MCF 10A (cell line): ENCODE measurements at regions of chr1 and their contacts with region 1.

Region 1: DNA sequence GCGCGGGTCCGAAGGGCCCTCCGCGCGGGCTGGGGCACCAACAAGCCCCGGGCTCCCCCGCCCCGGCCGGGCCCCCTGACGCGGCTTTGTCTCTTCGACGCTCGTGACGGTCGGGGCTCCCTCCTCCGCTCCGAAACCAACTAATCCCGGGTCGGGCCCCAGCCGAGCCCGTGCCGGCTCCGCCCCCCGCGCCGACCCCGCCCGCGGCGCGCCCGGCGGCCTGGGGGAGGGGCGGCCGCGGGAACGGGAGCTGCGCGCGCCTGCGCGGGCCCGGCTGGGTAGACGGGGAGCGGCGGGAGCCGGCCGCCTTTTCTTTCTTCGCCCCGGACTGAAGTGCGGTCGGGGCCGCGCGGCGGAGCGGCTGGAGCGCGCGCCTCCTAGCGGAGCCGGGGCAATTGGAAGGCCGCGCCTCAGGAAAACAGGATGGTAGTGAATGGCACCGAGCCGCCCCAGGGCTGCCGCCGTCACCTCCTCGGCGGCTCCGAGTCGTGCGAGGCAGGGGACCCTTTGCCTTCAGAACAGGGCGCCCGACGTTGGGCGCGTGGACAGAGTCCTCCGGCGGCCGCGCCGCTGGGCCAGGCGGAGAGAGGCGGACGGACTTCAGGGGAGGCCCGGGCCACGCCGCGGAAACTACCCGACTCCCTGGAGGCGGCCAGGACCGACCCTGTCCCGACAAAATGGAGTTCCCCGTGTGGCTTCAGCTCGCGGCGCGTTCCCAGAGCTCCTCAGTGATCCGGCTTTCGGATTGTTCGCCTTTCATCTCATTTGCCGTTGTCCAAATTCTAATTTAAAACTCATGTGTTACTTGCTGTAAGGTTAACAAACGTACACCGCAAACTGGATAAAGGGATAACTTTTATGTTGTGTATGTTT is at the start of gene TP53BP2:
- DNase-seq: peak; percentile 95
- H3K4me3 Mint-ChIP-seq: peak within 1 kb of the TSS; percentile 87
- H3K27ac Mint-ChIP-seq: peak within 1 kb of the TSS; percentile 100
- H3K4me1 Mint-ChIP-seq: peaks cover 21% of the 10 kb centered on the region
- H3K27me3 Mint-ChIP-seq: no peaks in the 10 kb centered on the region
- CTCF ChIP-seq: peak; percentile 90
- total RNA-seq, gene TP53BP2: 62.4 and 64.0 TPM in 2 replicates

Region 2: GRCh38 chr1:223421676-223422075 is 424.4 kb before region 1 on chr1:
- CTCF ChIA-PET with region 1: no interaction called
- POLR2A ChIA-PET with region 1: no interaction called
- intact Hi-C with region 1: no loop called
- DNase-seq: peak; percentile 90
- H3K4me3 Mint-ChIP-seq: no peak overlapping the region
- H3K27ac Mint-ChIP-seq: peak overlapping the region; percentile 44
- H3K4me1 Mint-ChIP-seq: peaks cover 25% of the 10 kb centered on the region
- H3K27me3 Mint-ChIP-seq: no peaks in the 10 kb centered on the region
- CTCF ChIP-seq: no peak

Region 3: GRCh38 chr1:223712194-223712849 is 133.7 kb before region 1 on chr1 and contains the start of gene CAPN2:
- CTCF ChIA-PET with region 1: interaction called, 9 read pairs
- POLR2A ChIA-PET with region 1: interaction called, 81 read pairs
- intact Hi-C with region 1: loop called (anchors 2 kb)
- DNase-seq: peak; percentile 94
- H3K4me3 Mint-ChIP-seq: peak within 1 kb of the TSS; percentile 77
- H3K27ac Mint-ChIP-seq: peak within 1 kb of the TSS; percentile 88
- H3K4me1 Mint-ChIP-seq: peaks cover 61% of the 10 kb centered on the region
- H3K27me3 Mint-ChIP-seq: no peaks in the 10 kb centered on the region
- CTCF ChIP-seq: peak; percentile 98
- total RNA-seq, gene CAPN2: 513 and 622 TPM in 2 replicates

Region 4: GRCh38 chr1:223780949-223781348 is 65.1 kb before region 1 on chr1:
- CTCF ChIA-PET with region 1: interaction called, 3 read pairs
- POLR2A ChIA-PET with region 1: interaction called, 24 read pairs
- intact Hi-C with region 1: loop called (anchors 1 kb)
- DNase-seq: no peak
- H3K4me3 Mint-ChIP-seq: no peak overlapping the region
- H3K27ac Mint-ChIP-seq: no peak overlapping the region
- H3K4me1 Mint-ChIP-seq: peaks cover 17% of the 10 kb centered on the region
- H3K27me3 Mint-ChIP-seq: no peaks in the 10 kb centered on the region
- CTCF ChIP-seq: no peak

Region 5: DNA sequence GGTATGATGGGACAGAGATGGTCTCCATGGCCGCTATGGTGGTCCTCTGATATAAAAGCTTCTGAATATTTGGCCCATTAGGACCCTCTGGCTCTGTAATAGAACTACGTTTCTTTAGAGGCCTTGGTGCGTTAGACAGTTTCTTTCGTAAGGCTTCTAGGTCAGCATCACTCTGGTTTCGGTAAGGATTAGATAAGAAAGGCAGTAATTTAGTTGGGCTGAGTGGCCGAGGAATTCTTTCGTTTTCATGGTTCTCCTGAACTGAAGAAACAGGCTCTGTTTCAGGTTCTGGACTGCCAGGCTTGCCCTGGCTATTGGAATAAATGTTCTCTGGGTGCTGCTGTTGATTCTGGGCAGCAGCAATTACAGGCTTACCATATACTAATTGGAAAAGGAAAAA is 49.8 kb before region 1 on chr1:
- CTCF ChIA-PET with region 1: no interaction called
- POLR2A ChIA-PET with region 1: no interaction called
- intact Hi-C with region 1: no loop called
- DNase-seq: no peak
- H3K4me3 Mint-ChIP-seq: no peak overlapping the region
- H3K27ac Mint-ChIP-seq: no peak overlapping the region
- H3K4me1 Mint-ChIP-seq: no peaks in the 10 kb centered on the region
- H3K27me3 Mint-ChIP-seq: no peaks in the 10 kb centered on the region
- CTCF ChIP-seq: no peak

Region 6: GRCh38 chr1:223831755-223832636 is 14.1 kb before region 1 on chr1:
- CTCF ChIA-PET with region 1: interaction called, 7 read pairs
- POLR2A ChIA-PET with region 1: interaction called, 144 read pairs
- intact Hi-C with region 1: loop called (anchors 1 kb)
- DNase-seq: peak; percentile 59
- H3K4me3 Mint-ChIP-seq: no peak overlapping the region
- H3K27ac Mint-ChIP-seq: peak overlapping the region; percentile 80
- H3K4me1 Mint-ChIP-seq: peaks cover 27% of the 10 kb centered on the region
- H3K27me3 Mint-ChIP-seq: no peaks in the 10 kb centered on the region
- CTCF ChIP-seq: peak; percentile 13

Region 7: GRCh38 chr1:223870617-223871574 is 24.9 kb after region 1 on chr1:
- CTCF ChIA-PET with region 1: interaction called, 7 read pairs
- POLR2A ChIA-PET with region 1: interaction called, 12 read pairs
- intact Hi-C with region 1: no loop called
- DNase-seq: no peak
- H3K4me3 Mint-ChIP-seq: no peak overlapping the region
- H3K27ac Mint-ChIP-seq: no peak overlapping the region
- H3K4me1 Mint-ChIP-seq: no peaks in the 10 kb centered on the region
- H3K27me3 Mint-ChIP-seq: peaks cover 68% of the 10 kb centered on the region
- CTCF ChIP-seq: no peak